Calu3 (cell line): ENCODE measurements at regions of chr5 and their contacts with region 1.

Region 1: GRCh38 chr5:174413563-174414314 is 310.6 kb upstream of the MSX2 start:
- DNase-seq: no peak
- H3K4me3 Mint-ChIP-seq: peak overlapping the region; percentile 11
- H3K27ac Mint-ChIP-seq: peak overlapping the region; percentile 64
- H3K4me1 Mint-ChIP-seq: peaks cover 53% of the 10 kb centered on the region
- H3K27me3 Mint-ChIP-seq: no peaks in the 10 kb centered on the region
- CTCF ChIP-seq: no peak

Region 2: DNA sequence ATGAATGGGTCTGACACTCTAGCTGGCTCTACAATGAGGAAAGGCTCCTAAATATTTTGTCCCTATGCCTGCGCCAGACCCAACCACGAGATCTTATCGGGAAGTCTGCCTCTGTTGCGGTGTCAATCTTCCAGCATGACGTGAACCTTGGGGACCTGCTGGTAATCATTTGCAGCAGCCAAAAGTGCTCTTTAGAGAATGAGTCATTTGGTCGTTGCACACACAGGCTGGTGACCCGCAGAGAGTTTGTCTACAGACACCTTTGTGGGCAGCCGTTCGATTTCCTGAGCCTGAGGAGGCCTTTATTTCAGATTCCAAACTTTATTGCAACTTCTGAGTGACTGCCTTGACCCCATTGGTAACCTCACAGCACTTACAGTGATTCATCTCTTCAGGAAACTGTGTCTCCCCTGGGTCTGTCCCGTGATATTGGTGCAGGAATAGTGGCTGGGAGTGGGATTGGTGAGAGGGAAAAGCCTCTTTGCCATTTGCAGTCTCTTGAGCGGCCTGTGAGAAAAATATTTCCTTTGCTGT is 42.1 kb before region 1 on chr5:
- CTCF ChIA-PET with region 1: no interaction called
- intact Hi-C with region 1: loop called (anchors 5 kb)
- DNase-seq: peak; percentile 87
- H3K4me3 Mint-ChIP-seq: peak overlapping the region; percentile 9
- H3K27ac Mint-ChIP-seq: peak overlapping the region; percentile 39
- H3K4me1 Mint-ChIP-seq: peaks cover 33% of the 10 kb centered on the region
- H3K27me3 Mint-ChIP-seq: no peaks in the 10 kb centered on the region
- CTCF ChIP-seq: no peak

Region 3: GRCh38 chr5:174895363-174895762 is 481.6 kb after region 1 on chr5:
- CTCF ChIA-PET with region 1: no interaction called
- intact Hi-C with region 1: no loop called
- DNase-seq: peak; percentile 10
- H3K4me3 Mint-ChIP-seq: no peak overlapping the region
- H3K27ac Mint-ChIP-seq: no peak overlapping the region
- H3K4me1 Mint-ChIP-seq: no peaks in the 10 kb centered on the region
- H3K27me3 Mint-ChIP-seq: no peaks in the 10 kb centered on the region
- CTCF ChIP-seq: no peak